GM18951 (cell line): ENCODE measurements at regions of chr6 and their contacts with region 1.

Region 1: GRCh38 chr6:95078457-95078856 is 498.9 kb upstream of the MANEA start:
- POLR2A ChIP-seq: no peak

Region 2: GRCh38 chr6:94636780-94637385 is 441.6 kb before region 1 on chr6:
- in situ Hi-C with region 1: no loop called
- POLR2A ChIP-seq: no peak

Region 3: DNA sequence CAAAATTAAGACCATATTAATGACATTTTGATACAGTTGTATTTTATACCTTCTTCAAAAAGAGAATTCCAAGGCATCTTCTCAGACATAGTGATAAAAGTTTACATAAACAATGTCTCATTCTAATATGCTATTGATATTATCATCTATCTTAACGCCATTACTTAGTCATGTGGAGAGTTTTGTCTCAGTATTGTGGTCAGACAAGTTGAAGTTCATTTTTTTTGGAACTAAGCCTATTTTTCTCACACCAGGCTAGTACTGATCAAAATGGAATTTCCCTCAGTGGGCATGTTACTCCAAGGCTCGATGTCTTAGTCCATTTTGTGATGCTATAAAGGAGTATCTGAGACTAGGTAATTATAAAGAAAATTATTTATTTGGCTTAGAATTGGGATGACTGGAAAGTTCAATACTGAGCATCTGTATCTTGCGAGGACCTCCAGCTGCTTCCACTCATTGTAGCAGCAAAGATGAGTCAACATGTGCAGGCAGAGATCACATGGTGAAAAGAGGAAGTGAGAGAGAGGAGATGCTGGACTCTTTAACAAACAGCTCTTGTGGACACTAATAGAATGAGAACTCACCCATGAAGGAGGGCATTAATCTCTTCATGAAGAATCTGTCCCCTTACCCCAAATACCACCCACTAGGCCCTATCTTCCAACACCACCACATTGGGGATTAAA is 326.7 kb before region 1 on chr6:
- in situ Hi-C with region 1: no loop called
- POLR2A ChIP-seq: no peak

Region 4: DNA sequence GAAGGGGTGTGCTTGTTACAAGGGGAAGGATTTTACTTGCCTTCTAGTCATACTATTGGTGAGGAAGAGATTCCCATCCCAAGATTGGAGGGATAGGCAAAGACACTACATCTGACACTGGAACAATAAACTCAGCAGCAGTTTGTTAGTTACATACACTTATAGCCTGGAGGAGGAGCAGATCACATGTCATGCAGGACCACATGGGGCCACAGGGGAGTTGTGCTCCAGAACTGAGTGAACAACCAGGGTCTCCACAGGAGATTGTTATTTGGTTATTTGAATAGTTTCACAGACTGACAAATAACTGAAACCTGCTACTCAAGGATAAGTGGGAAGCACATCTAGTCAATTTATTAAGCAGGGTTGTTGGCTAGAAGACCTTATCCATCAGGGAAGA is 60.5 kb before region 1 on chr6:
- in situ Hi-C with region 1: loop called (anchors 10 kb)
- POLR2A ChIP-seq: no peak